ENCODE measurements at regions of chr12 and their contacts with region 1.

Region 1: DNA sequence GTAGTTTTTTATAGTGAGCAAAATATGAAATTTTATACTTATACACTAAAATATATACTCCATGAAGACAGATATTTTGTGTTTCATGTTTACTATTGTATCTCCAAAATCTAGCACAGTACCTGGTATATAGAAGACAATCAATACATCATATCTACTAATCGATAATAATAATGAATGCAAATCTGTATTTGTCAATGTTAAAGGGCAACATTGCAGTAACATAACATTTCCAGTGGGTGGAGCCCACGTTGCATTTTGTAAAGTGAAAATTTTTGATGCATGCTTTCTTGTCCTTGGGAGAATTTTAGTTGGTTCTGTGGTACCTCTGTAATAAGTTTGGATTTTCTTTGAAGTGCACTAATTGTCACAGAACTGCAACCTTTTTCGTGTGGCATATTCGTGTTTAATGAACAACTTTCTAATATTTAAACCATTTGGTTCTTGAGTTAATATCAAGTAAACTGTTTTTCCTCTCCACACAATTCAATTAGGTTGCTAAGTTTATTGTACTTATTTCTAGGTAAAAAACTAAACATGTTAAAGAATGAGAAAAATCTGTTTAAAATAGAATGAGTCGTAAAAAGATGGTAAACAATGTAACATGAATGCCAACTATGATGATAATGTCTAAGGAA is 47.4 kb downstream of the AVPR1A start:
- DNase-seq: no peak
- ATAC-seq: no peak

Region 2: DNA sequence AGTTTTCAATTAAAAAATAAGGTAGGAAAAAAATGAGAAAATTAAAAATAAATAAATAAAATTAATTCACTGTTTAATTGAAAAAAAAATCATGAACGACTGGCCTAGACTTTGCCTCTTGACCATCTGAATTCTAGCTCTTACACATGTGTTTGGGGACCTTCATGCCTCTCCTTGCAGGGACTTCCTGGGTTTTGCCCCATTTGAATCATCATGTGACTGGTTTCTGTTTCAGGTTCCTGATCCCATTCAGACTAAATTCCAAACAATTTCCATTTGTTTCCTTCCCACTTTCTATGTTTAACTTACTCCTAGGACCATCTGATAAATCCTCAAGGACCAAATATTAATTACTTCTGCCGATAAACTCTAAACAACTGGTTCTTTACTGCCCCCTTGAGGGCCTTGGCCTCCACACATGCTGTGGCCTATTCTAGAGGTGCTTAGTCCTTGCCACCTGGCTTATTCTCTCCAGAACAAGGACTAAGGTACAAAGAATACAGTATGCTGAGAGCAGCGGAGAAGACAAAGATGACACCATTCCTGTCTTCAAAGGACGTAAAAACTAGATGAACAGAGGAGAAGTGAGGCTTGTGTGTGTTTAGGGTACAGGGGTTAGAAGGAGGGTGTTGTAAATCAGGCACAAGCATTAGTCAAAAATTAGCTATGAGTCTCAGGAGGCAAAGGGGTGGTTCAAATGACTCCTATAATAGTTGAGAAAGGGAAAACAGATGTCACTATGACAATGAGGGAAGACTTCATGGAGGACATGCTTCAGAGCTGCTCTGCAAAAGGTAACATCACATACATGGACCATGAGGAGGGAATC is 173.1 kb after region 1 on chr12:
- intact Hi-C with region 1: loop called in 1 of 2 experiments (anchors 5 kb)
- DNase-seq: no peak
- ATAC-seq: no peak

Region 3: GRCh38 chr12:63795944-63796343 is 692.3 kb after region 1 on chr12:
- intact Hi-C with region 1: loop called in 1 of 2 experiments (anchors 5 kb)
- DNase-seq: no peak
- ATAC-seq: no peak